K562 (cell line): ENCODE measurements at regions of chrX and their contacts with region 1.

Region 1: GRCh38 chrX:83008415-83008814 is 499.7 kb upstream of the POU3F4 start:
- DNase-seq: peak in 3 of 4 experiments; percentile 3 to 8 (median 5)
- ATAC-seq: no peak
- H3K4me3 ChIP-seq: no peak overlapping the region
- H3K27ac ChIP-seq: no peak overlapping the region
- H3K4me1 ChIP-seq: no peaks in the 10 kb centered on the region
- H3K27me3 ChIP-seq: no peaks in the 10 kb centered on the region
- CTCF ChIP-seq: peak in 2 of 3 experiments; percentile 32 to 34; a peak in 2 of 6 replicates
- EP300 ChIP-seq: no peak
- POLR2A ChIP-seq: no peak
- RAD21 ChIP-seq: no peak

Region 2: DNA sequence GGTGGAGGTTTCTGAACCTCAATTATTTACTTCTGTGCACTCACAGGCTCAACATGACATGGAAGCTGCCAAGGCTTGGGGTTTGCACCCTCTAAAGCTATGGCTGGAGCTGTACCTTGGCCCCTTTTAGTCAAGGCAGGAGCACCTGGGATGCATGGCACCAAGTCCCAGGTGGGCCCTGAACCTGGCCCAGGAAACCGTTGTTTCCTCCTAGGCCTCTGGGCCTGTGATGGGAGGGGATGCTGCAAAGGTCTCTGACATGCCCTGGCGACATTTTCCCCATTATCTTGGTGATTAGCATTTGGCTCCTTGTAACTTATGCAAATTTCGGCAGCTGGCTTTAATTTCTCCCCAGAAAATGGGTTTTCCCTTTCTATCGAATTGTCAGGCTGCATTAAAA is 226.4 kb before region 1 on chrX:
- CTCF ChIA-PET with region 1: no interaction called
- POLR2A ChIA-PET with region 1: no interaction called
- in situ Hi-C with region 1: no loop called
- intact Hi-C with region 1: no loop called
- DNase-seq: no peak
- ATAC-seq: no peak
- H3K4me3 ChIP-seq: no peak overlapping the region
- H3K27ac ChIP-seq: no peak overlapping the region
- H3K4me1 ChIP-seq: no peaks in the 10 kb centered on the region
- H3K27me3 ChIP-seq: no peaks in the 10 kb centered on the region
- CTCF ChIP-seq: no peak
- EP300 ChIP-seq: no peak
- POLR2A ChIP-seq: no peak
- RAD21 ChIP-seq: no peak

Region 3: GRCh38 chrX:83326539-83326938 is 318.1 kb after region 1 on chrX:
- CTCF ChIA-PET with region 1: no interaction called
- POLR2A ChIA-PET with region 1: no interaction called
- in situ Hi-C with region 1: no loop called
- intact Hi-C with region 1: no loop called
- DNase-seq: no peak
- ATAC-seq: no peak
- H3K4me3 ChIP-seq: no peak overlapping the region
- H3K27ac ChIP-seq: no peak overlapping the region
- H3K4me1 ChIP-seq: no peaks in the 10 kb centered on the region
- H3K27me3 ChIP-seq: no peaks in the 10 kb centered on the region
- CTCF ChIP-seq: no peak
- EP300 ChIP-seq: no peak
- POLR2A ChIP-seq: no peak
- RAD21 ChIP-seq: no peak

Region 4: GRCh38 chrX:83845397-83845796 is 837.0 kb after region 1 on chrX:
- CTCF ChIA-PET with region 1: no interaction called
- POLR2A ChIA-PET with region 1: no interaction called
- in situ Hi-C with region 1: no loop called
- intact Hi-C with region 1: loop called (anchors 5 kb)
- DNase-seq: peak; percentile 9 to 13 (median 12)
- ATAC-seq: peak; percentile 42; the same call in 1 of the 3 replicates
- H3K4me3 ChIP-seq: no peak overlapping the region
- H3K27ac ChIP-seq: no peak overlapping the region
- H3K4me1 ChIP-seq: no peaks in the 10 kb centered on the region
- H3K27me3 ChIP-seq: no peaks in the 10 kb centered on the region
- CTCF ChIP-seq: peak; percentile 10 to 55 (median 50); a peak in 4 of 6 replicates
- EP300 ChIP-seq: no peak
- POLR2A ChIP-seq: no peak
- RAD21 ChIP-seq: peak in 1 of 2 experiments; percentile 34; a peak in 2 of 4 replicates